Activated CD8-positive, alpha-beta T cell treated with anti-CD3 and anti-CD28 coated beads for 36 hours (primary cell): ENCODE measurements at regions of chr2 and their contacts with region 1.

Region 1: GRCh38 chr2:164841719-164842623 is at the start of gene COBLL1:
- DNase-seq: peak; percentile 37
- ATAC-seq: peak; percentile 64
- H3K4me3 Mint-ChIP-seq: peak within 1 kb of the TSS; percentile 57
- H3K27ac Mint-ChIP-seq: no peak within 1 kb of the TSS
- H3K4me1 Mint-ChIP-seq: peaks cover 7% of the 10 kb centered on the region
- H3K27me3 Mint-ChIP-seq: peaks cover 35% of the 10 kb centered on the region
- CTCF ChIP-seq: peak; percentile 53
- total RNA-seq, gene COBLL1: 0.36 to 0.68 TPM

Region 2: GRCh38 chr2:164778723-164779122 is 63.2 kb before region 1 on chr2:
- CTCF ChIA-PET with region 1: no interaction called
- POLR2A ChIA-PET with region 1: no interaction called
- intact Hi-C with region 1: no loop called
- DNase-seq: no peak
- ATAC-seq: no peak
- H3K4me3 Mint-ChIP-seq: no peak overlapping the region
- H3K27ac Mint-ChIP-seq: no peak overlapping the region
- H3K4me1 Mint-ChIP-seq: no peaks in the 10 kb centered on the region
- H3K27me3 Mint-ChIP-seq: no peaks in the 10 kb centered on the region
- CTCF ChIP-seq: no peak

Region 3: DNA sequence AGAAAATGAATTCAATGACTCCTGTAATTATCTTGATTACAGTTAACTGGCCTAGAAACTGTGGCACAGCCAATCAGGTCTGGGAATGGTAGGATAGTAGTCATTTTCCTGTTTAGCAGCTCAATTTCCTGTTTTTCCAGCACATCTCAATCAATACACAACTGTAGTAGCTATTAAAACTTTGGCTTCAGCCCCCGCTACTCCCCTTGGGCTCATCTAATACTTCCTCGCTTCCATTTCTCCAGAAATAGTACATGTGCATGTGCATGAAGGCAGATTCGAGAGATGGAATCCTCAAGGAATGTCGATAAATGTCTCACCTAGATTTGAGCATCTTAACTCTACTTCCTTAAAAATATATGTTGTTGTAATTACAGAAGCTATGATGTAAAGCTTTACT is 10.1 kb before region 1 on chr2:
- CTCF ChIA-PET with region 1: interaction called, 13 read pairs
- POLR2A ChIA-PET with region 1: no interaction called
- intact Hi-C with region 1: no loop called
- DNase-seq: no peak
- ATAC-seq: no peak
- H3K4me3 Mint-ChIP-seq: no peak overlapping the region
- H3K27ac Mint-ChIP-seq: no peak overlapping the region
- H3K4me1 Mint-ChIP-seq: no peaks in the 10 kb centered on the region
- H3K27me3 Mint-ChIP-seq: peaks cover 5% of the 10 kb centered on the region
- CTCF ChIP-seq: no peak

Region 4: GRCh38 chr2:164882276-164882675 is 40.3 kb after region 1 on chr2:
- CTCF ChIA-PET with region 1: no interaction called
- POLR2A ChIA-PET with region 1: no interaction called
- intact Hi-C with region 1: no loop called
- DNase-seq: no peak
- ATAC-seq: no peak
- H3K4me3 Mint-ChIP-seq: no peak overlapping the region
- H3K27ac Mint-ChIP-seq: no peak overlapping the region
- H3K4me1 Mint-ChIP-seq: no peaks in the 10 kb centered on the region
- H3K27me3 Mint-ChIP-seq: no peaks in the 10 kb centered on the region
- CTCF ChIP-seq: no peak

Region 5: DNA sequence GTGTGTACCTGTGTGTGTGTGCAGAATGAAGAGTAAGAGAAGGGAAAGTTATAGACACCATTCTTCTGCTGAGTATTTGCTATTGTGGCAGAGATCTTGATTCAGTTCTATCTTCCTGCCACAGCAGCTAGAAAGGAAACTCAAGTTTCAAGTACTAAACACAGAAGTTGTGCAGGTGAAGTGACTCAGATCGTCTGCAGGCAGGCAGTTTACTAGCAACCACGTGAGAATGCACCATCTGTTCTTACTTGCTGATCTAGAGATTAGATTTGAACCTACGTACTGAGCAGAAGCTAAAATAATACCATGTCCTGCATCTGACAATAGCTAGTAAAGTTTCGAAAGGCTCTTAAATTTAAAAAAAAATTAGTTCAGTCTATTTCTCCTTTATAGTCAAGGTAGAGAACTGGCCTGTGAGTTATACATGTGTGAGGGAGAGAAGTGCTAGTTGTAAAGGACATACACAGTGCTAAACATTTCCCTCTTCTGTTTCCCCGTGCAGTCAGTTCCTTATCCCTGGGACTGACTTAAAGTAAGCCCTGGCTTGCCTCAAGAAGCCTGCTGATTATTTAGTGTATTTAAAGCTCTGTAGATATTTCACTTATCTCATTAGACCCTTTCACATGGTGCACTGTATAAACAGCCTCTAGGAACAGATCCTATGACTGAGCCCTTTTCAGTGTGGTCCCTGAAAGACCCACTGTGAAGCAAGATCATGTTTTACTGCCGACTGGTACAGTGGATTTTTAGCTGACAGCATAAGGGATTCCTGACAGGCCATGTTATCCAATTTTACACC is 68.3 kb after region 1 on chr2:
- CTCF ChIA-PET with region 1: no interaction called
- POLR2A ChIA-PET with region 1: no interaction called
- intact Hi-C with region 1: no loop called
- DNase-seq: peak; percentile 18
- ATAC-seq: peak; percentile 78
- H3K4me3 Mint-ChIP-seq: no peak overlapping the region
- H3K27ac Mint-ChIP-seq: no peak overlapping the region
- H3K4me1 Mint-ChIP-seq: peaks cover 4% of the 10 kb centered on the region
- H3K27me3 Mint-ChIP-seq: peaks cover 1% of the 10 kb centered on the region
- CTCF ChIP-seq: no peak